Cardiac septum (tissue), 1 donor: ENCODE measurements at regions of chrX and their contacts with region 1.

Region 1: DNA sequence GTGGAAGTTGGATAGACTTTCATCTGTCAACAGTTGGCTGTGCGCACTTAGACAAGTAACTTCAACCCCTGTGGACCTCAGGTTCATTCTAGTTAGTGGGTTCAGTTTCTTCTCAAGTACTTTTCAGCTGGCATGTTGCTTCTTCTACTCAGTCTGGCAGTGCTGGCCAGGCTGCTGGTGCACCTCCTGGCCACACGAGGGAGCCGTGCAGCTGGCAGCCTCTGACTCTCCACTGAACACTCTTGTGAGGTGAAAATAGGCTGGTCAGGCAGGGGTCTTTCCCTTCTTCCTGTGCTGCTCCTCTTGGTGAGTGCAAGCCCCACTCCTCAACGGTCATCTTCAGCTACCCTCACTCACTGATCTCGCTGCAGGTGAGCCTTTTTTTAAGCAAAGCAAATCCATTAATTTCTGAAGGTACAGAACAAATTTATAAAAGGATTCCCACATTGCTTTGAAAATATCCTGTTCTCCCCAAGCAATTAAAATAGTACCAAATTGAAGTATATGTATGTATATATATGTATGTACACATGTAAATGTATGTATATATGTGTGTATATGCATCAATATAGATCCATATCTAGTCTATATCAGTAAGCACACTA is 30.6 kb downstream of the LONRF3 start:
- DNase-seq: no peak

Region 2: GRCh38 chrX:118553042-118553710 is 451.8 kb before region 1 on chrX:
- intact Hi-C with region 1: no loop called
- DNase-seq: no peak

Region 3: GRCh38 chrX:119067023-119067739 is 62.2 kb after region 1 on chrX:
- intact Hi-C with region 1: loop called (anchors 5 kb)
- DNase-seq: no peak

Region 4: GRCh38 chrX:120575379-120576114 is 1570.5 kb after region 1 on chrX:
- intact Hi-C with region 1: no loop called
- DNase-seq: no peak